ENCODE measurements at regions of chr6 and their contacts with region 1.

Region 1: DNA sequence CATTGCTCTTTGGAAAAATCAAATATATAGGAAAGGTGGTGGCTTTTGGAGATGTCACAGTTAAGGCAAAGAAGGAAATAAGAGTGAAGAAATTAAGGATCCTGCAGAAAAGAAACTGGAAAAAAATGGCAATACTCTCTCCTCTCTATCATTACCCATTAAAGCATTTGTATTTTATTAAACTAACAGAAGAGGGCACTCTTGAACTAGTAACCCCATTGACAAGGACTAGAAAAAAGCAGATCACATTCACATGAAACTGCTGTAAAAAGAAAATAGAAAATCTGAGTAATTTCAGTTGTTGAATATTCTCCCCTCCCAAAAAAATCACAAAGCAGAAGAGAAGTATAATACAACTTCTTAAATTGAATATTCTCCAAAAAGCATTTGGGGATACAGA is 104.1 kb upstream of the SLC35B3 start:
- DNase-seq: peak; percentile 33
- ATAC-seq: peak; percentile 49; the same call in 1 of the 2 replicates
- H3K4me3 ChIP-seq: no peak overlapping the region
- H3K27ac ChIP-seq: no peak overlapping the region
- H3K4me1 ChIP-seq: 0 out of 2 replicates have a peak, but pooled peaks cover 6% of the 10 kb centered on the region
- H3K27me3 ChIP-seq: no peaks in the 10 kb centered on the region; the same call in 1 of the 2 replicates
- CTCF ChIP-seq: peak; percentile 65

Region 2: DNA sequence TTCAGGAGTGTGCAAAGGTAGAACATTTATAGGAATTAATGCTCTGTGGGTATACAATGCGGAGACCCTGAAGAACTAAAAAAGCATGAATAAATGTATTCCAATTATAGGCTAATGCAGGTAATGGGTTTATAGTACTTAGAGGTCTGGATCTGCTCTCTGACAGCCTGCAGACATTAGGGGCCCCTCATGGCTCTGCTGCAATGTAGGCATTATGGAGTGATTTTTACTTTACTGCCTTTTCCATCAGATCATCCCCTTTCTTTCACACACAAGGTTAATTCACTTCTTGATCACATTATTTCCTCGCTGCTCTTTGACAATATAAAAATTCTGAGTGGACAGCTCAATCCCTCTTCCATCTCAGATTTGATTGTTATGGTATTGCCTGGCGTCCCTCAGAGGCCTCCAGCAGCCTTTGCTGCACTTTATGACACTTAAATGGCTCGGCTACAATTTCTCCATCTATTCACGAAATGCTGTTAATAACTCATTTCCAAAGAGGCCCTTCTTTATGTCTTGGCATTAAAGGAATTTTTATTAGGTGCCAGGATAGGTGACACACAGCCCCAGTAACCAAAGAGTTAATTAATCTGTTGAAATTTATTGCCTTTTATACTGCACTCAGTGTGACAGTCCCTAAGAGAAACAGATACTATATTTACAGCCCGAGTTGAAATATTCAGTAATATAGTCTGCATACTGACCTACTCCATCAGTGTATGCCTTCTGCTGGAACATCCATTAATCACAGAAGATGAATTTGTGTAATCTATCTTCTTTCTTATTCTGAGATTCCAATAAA is 70.7 kb before region 1 on chr6:
- CTCF ChIA-PET with region 1: no interaction called
- POLR2A ChIA-PET with region 1: no interaction called
- intact Hi-C with region 1: no loop called
- DNase-seq: no peak
- ATAC-seq: no peak
- H3K4me3 ChIP-seq: no peak overlapping the region
- H3K27ac ChIP-seq: no peak overlapping the region
- H3K4me1 ChIP-seq: no peaks in the 10 kb centered on the region
- H3K27me3 ChIP-seq: peaks cover 8% of the 10 kb centered on the region; the same call in 1 of the 2 replicates
- CTCF ChIP-seq: no peak

Region 3: GRCh38 chr6:8707956-8708772 is 168.7 kb after region 1 on chr6:
- CTCF ChIA-PET with region 1: no interaction called
- POLR2A ChIA-PET with region 1: no interaction called
- intact Hi-C with region 1: loop called (anchors 2 kb)
- DNase-seq: peak; percentile 62
- ATAC-seq: no peak
- H3K4me3 ChIP-seq: no peak overlapping the region
- H3K27ac ChIP-seq: no peak overlapping the region
- H3K4me1 ChIP-seq: no peaks in the 10 kb centered on the region
- H3K27me3 ChIP-seq: peaks cover 27% of the 10 kb centered on the region; the same call in 1 of the 2 replicates
- CTCF ChIP-seq: peak; percentile 65

Region 4: DNA sequence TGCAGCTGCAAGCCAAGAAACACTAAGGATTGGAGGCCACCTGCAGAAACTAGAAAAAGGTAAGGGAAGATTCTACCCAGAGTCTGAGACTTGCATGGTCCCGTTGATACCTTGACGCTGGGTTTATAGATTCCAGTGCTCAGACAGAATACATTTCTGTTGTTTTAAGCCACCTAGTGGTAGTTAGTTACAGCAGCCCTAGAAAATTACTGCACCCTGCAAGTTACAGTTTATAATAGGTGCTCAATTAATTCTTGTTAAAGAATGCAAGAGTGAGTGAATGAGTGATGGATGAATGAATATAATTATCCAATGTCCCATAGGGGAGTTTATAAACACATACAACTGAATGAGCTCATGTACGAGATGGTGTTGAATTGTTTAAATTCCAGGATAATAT is 349.0 kb after region 1 on chr6:
- CTCF ChIA-PET with region 1: no interaction called
- POLR2A ChIA-PET with region 1: no interaction called
- intact Hi-C with region 1: loop called (anchors 5 kb)
- DNase-seq: peak; percentile 12
- ATAC-seq: no peak
- H3K4me3 ChIP-seq: no peak overlapping the region
- H3K27ac ChIP-seq: no peak overlapping the region
- H3K4me1 ChIP-seq: no peaks in the 10 kb centered on the region
- H3K27me3 ChIP-seq: peaks cover 28% of the 10 kb centered on the region
- CTCF ChIP-seq: peak; percentile 60

Region 5: DNA sequence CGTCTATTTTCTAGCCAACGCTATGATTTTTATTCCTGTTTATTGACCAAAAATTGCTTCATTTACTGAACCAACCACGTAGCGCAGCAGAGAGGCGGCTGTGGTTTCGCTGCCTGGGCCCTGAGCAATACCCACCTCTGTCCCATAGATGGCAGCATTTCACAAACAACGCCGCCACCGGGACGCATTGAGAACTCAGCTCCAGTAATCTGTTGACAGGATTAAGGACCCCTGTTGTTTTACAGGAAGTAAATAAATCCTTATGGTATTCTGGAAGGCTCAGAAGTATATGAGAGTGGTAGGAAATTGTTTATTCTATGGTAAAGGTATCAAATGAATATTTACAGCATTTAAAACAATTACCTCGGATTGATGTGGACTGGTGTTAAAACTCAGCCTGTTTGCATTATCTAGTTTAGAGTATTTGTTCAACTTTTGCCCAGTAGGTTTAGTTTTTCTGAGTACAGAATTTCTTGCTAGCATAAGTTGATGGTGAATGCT is 443.8 kb after region 1 on chr6:
- CTCF ChIA-PET with region 1: no interaction called
- POLR2A ChIA-PET with region 1: no interaction called
- intact Hi-C with region 1: loop called (anchors 2 kb)
- DNase-seq: peak; percentile 78
- ATAC-seq: peak; percentile 98
- H3K4me3 ChIP-seq: no peak overlapping the region
- H3K27ac ChIP-seq: no peak overlapping the region
- H3K4me1 ChIP-seq: no peaks in the 10 kb centered on the region; the same call in 1 of the 2 replicates
- H3K27me3 ChIP-seq: peaks cover 21% of the 10 kb centered on the region; the same call in 1 of the 2 replicates
- CTCF ChIP-seq: peak; percentile 96